AG04449 (cell line): ENCODE measurements at regions of chr16 and their contacts with region 1.

Region 1: GRCh38 chr16:23678430-23679273 is at the start of gene PLK1:
- DNase-seq: no peak
- H3K4me3 ChIP-seq: peak within 1 kb of the TSS; percentile 68
- CTCF ChIP-seq: peak; percentile 24

Region 2: DNA sequence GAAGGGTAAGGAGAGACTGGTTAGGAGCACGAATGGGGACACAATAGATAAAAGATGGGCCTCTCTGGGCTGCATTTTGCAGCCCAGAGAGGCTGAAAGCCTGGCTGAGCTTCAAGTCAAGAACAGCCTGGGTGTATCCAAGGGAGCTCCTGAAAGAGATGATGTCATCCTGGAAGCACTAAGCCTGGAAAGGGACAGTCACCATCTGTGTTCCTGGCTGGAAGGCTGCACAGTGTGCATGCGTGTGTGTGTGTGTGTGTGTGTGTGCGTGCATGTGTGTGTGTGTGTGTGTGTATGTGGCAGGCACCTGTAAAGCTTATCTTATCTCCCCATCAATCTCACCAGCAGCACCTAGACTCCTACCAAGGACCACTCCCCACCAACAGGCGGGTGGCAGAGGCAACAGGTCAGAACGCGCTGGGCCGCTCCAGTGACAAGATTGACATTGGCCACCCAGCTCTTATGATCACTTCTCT is 269.8 kb before region 1 on chr16:
- CTCF ChIA-PET with region 1: no interaction called
- POLR2A ChIA-PET with region 1: no interaction called
- DNase-seq: no peak
- H3K4me3 ChIP-seq: no peak overlapping the region
- CTCF ChIP-seq: no peak

Region 3: DNA sequence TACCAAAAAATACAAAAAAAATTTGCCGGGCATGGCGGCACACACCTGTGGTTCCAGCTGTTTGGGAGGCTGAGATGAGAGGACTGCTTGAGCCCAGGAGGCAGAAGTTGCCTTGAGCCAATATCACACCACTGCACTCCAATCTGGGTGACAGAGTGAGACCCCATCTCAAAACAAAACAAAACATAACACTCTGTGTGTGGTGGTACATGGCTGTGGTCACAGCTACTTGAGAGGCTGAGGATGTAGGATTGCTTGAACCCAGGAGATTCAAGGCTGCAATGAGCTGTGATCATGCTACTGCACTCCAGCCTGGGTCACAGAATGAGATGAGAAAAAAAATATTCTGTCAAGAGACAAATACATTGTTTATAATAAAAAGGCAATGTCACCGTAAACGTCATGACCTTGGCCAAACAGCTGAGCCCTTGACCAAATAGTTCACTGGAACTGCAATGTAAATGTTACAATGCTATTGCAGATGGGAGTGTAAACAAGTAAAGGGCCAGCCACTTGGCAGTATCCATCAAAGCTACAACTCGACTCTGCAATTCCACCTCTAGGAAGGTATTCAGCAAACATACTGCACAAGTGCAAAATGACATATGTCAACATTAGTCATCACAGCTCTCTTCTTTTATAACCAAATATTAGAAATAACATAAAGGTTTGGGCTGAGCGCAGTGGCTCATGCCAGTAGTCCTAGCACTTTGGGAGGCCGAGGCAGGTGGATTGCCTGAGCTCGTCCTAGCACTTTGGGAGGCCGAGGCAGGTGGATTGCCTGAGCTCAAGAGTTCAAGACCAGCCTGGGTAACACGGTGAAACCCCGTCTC is 138.5 kb before region 1 on chr16:
- CTCF ChIA-PET with region 1: no interaction called
- POLR2A ChIA-PET with region 1: no interaction called
- DNase-seq: no peak
- H3K4me3 ChIP-seq: no peak overlapping the region
- CTCF ChIP-seq: no peak

Region 4: DNA sequence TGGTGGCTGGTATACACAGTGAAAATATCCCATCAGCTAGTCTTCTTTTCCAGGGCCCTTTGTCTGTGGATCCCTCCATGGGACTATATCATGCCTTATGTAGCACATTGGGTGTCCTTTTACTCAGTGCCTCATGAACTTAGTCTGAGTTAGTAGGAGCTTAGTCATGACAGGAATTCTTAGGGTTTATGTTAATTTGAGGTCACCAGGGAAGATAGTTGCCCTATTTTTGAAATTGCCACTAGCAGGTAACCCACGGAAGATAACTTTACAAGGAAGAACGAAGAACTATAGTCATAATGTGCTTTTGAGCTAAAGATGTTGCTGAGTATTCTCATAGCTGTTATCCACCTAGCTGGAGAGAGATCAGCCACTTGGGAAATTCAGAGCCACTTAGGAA is 14.7 kb before region 1 on chr16:
- CTCF ChIA-PET with region 1: interaction called, 17 read pairs
- POLR2A ChIA-PET with region 1: no interaction called
- DNase-seq: no peak
- H3K4me3 ChIP-seq: no peak overlapping the region
- CTCF ChIP-seq: no peak